ENCODE measurements at regions of chr5 and their contacts with region 1.

Region 1: DNA sequence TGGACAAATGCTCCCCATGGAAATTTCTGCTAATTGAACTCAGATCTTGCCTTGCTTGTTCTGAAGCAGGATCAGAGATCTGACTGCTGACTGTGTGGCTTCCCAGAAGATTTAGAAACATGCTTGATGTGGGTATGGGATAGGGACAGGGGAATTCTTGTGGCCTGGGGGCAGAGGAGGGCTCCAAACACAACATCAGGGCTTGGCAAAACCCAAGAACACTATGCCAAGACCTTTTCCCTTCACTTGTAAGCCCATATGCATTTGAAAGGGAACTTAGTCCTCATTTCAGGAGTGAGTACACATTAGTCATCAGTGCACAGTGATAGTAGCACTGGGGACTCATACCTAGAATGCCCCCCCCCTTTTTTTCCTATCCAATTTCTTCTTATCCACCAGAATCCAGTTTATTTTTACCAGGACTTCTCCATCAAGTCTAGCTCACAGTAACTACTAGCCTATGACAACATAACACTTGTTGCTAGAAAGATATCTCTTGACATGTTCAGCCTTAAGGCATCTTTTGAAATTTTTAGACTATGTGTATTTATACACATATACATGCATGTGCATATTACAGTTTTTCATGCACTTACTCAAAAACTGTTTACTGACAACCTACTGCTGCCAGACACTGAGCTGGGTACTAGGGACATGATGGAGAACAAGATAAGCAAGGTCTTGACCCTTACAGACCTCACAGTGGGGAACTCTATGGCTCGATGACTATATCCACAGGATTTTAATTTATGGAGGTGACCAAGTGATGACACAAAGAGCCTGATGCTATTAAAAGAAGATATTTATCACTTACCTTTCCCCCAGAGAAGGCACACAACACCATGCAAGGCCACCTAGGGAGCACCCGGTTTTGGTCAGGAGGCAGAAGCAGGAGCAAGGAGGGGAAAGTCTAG is 158.3 kb upstream of the MAP3K1 start:
- DNase-seq: no peak
- H3K4me3 Mint-ChIP-seq: no peak overlapping the region
- H3K27ac Mint-ChIP-seq: no peak overlapping the region
- H3K4me1 Mint-ChIP-seq: peaks cover 14% of the 10 kb centered on the region
- H3K27me3 Mint-ChIP-seq: peaks cover 11% of the 10 kb centered on the region

Region 2: GRCh38 chr5:56670118-56670483 is 13.0 kb after region 1 on chr5:
- CTCF ChIA-PET with region 1: interaction called, 13 read pairs
- POLR2A ChIA-PET with region 1: no interaction called
- DNase-seq: peak; percentile 68
- H3K4me3 Mint-ChIP-seq: no peak overlapping the region
- H3K27ac Mint-ChIP-seq: peak overlapping the region; percentile 87
- H3K4me1 Mint-ChIP-seq: peaks cover 52% of the 10 kb centered on the region
- H3K27me3 Mint-ChIP-seq: peaks cover 2% of the 10 kb centered on the region